ENCODE measurements at regions of chr20 and their contacts with region 1.

Region 1: DNA sequence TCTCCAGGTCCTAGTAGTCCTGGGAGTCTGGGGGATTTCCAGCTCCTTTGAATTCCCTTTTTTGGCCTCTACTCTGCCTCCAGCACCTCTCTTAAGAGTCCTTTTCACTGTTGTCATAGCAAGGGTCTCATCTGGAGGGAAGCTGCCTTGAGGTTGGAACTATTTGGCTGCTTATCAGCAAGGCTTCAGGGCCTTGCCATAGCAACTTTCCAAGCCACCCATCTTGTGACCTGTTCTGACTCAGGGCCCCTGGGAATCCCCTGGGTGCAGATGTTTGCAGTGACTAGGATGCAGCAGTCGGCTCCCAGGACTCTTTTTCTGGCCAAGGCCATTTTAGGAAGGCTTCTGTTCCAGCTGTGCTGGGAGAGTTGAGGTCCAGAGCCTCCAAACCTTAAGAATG is 12.4 kb downstream of the PKIG start:
- DNase-seq: peak; percentile 69 to 86
- H3K4me3 ChIP-seq: no peak overlapping the region
- H3K27ac ChIP-seq: peak overlapping the region; percentile 81 to 89
- H3K4me1 ChIP-seq: peaks cover 0 to 80% (median 56%) of the 10 kb centered on the region in 4 donors
- H3K27me3 ChIP-seq: no peaks in the 10 kb centered on the region
- CTCF ChIP-seq: no peak

Region 2: GRCh38 chr20:44532259-44532980 is 62.3 kb before region 1 on chr20:
- intact Hi-C with region 1: loop called (anchors 5 kb)
- DNase-seq: peak in 1 of 2 donors; percentile 27
- H3K4me3 ChIP-seq: peak overlapping the region; percentile 69
- H3K27ac ChIP-seq: peak overlapping the region; percentile 57 to 78
- H3K4me1 ChIP-seq: peaks cover 0 to 17% (median 9%) of the 10 kb centered on the region in 4 donors
- H3K27me3 ChIP-seq: no peaks in the 10 kb centered on the region
- CTCF ChIP-seq: no peak

Region 3: DNA sequence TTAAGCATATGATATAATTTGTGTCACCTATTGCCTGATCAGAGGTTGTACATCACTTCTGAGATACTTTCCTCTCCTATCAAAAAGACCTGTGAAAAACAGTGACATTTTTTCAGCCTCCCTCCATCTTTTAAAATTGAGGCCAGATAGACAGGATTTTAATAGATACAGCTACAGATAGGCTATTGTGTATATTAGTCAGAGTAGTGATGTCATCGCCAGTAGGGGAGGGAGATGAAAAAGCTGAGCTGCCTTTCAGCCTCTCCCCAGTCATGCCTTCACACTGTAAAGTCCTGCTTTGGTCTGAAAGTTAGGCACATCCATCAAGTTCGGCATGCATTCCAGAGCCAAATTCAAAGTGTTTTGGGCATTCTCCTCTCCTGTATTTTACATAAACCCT is 307.2 kb after region 1 on chr20:
- intact Hi-C with region 1: no loop called
- DNase-seq: no peak
- H3K4me3 ChIP-seq: no peak overlapping the region
- H3K27ac ChIP-seq: no peak overlapping the region
- H3K4me1 ChIP-seq: peaks cover 0 to 36% (median 13%) of the 10 kb centered on the region in 4 donors
- H3K27me3 ChIP-seq: no peaks in the 10 kb centered on the region
- CTCF ChIP-seq: no peak